ENCODE measurements at regions of chr12 and their contacts with region 1.

Region 1: DNA sequence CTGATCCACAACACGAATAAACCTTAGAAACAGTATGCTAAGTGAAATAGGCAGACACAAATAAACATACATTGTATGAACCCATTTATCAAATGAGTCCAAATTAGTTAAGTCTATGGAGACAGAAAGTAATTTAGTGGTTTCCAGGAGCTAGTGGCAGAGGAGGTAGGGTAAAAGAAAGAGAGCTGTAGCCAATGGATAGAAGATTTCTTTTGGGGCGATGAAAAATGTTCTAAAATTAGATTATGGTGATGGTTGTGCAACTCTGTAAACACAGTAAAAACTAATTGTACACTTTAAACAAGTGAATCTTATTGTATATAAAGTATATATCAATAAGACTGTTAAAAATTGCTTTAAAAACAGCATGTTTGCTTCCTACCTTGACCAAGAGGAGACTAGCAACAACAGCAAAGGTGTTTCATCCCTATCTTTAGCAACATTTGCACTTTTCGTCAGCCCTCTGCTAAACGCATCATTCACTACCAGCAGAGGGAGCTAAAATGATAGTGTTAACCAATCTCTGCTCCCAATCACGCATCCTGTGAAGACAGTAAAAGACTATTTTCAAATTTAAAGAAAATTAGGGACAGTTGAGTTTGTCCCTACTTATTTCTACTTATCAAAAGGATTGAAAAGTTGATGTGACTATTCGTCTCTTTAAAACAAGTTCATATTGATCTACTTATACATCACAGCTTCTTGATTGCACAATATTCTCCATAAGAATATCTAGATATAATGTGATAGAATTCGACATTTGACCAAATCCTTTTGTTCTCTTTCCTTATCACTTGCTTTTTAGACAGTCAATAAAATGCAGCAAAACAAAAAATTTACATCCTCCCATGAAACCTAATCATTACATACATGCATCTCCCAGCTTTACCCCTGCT is 24.0 kb upstream of the LGR5 start:
- DNase-seq: peak; percentile 81
- ATAC-seq: peak; percentile 86
- H3K4me3 ChIP-seq: no peak overlapping the region
- H3K27ac ChIP-seq: no peak overlapping the region
- H3K4me1 ChIP-seq: no peaks in the 10 kb centered on the region
- H3K27me3 ChIP-seq: no peaks in the 10 kb centered on the region
- CTCF ChIP-seq: peak; percentile 91

Region 2: GRCh38 chr12:71312768-71313403 is 102.7 kb before region 1 on chr12:
- CTCF ChIA-PET with region 1: no interaction called
- POLR2A ChIA-PET with region 1: no interaction called
- intact Hi-C with region 1: no loop called
- DNase-seq: peak; percentile 56
- ATAC-seq: no peak; the same call in 1 of the 2 replicates
- H3K4me3 ChIP-seq: no peak overlapping the region
- H3K27ac ChIP-seq: no peak overlapping the region
- H3K4me1 ChIP-seq: peaks cover 10% of the 10 kb centered on the region; the same call in 1 of the 2 replicates
- H3K27me3 ChIP-seq: no peaks in the 10 kb centered on the region
- CTCF ChIP-seq: no peak

Region 3: DNA sequence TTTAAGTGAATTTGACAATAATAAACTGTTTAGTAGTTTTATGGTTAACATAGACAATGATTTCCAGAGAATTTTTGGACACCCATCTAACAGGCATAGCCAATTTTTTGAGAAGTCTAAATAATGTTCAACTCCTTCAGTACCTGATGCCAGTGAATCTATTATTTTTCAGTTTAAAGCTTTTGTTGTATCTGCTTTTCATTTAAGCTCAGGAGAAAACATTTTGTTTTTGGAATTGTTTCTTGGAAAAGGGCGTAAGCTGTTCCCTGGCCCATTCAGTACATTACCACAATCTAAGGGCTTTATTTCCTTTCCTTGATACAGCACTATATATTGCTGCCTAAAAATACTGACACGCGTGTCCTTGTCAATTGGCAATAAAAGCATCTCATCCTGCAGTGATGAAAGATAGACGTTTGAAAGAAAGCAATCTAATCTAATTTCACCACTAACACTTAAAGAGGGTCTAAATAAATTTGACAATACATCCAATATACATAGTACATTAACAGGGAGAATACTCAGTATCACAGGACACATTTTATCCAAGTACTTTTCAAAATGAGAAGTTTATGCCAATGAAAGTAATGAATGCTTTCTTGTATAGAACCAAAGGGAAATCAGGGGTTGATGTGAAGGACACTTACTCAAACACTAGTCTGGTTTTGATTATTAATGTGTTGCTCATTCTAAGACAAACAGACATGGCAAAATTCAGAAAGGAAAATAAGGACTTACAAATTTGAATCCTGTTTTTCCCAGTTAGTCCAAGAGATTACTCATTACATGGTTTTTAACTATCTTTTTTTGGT is 80.2 kb before region 1 on chr12:
- CTCF ChIA-PET with region 1: no interaction called
- POLR2A ChIA-PET with region 1: no interaction called
- intact Hi-C with region 1: no loop called
- DNase-seq: peak; percentile 63
- ATAC-seq: peak; percentile 82
- H3K4me3 ChIP-seq: no peak overlapping the region
- H3K27ac ChIP-seq: peak overlapping the region; percentile 49
- H3K4me1 ChIP-seq: peaks cover 23% of the 10 kb centered on the region
- H3K27me3 ChIP-seq: no peaks in the 10 kb centered on the region
- CTCF ChIP-seq: no peak

Region 4: GRCh38 chr12:71385155-71385554 is 30.4 kb before region 1 on chr12:
- CTCF ChIA-PET with region 1: no interaction called
- POLR2A ChIA-PET with region 1: no interaction called
- intact Hi-C with region 1: no loop called
- DNase-seq: no peak
- ATAC-seq: no peak
- H3K4me3 ChIP-seq: no peak overlapping the region
- H3K27ac ChIP-seq: no peak overlapping the region
- H3K4me1 ChIP-seq: no peaks in the 10 kb centered on the region
- H3K27me3 ChIP-seq: no peaks in the 10 kb centered on the region
- CTCF ChIP-seq: no peak

Region 5: DNA sequence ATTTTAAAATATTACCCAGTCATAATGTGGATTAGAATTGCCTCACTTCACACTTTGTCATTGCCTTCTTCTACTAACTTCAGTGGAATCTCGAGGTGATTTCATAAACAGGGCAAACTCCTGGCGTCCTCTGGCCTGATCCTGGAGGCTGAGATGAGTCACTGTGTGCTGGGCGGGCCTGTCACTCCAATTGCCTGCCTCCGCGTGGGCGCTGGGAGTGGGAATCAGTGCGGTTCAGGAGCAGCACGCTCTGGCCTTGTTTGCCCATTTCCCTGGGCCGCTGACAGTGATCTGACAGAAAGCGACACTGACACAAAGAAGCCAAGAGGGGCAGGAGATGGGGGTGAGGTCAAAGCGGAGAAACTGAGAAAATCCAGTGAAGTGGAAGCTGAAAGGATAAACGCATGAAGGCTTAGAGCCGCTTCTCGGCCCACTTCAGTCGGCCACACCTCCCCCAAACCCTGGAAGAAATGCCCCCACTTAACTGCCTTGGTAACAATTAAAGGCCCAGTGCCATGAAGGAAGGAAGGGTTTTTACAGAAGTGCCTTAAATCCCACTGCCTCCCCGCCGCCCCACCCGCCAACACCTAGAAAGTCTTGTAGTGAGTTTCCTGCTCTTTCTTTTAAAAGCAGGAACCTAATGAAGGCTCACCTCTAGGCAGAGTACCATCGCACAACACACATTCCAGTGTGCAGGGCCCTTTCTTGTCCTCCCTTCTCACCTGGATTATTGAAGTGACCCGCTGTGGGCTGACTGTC is 53.9 kb after region 1 on chr12:
- CTCF ChIA-PET with region 1: no interaction called
- POLR2A ChIA-PET with region 1: no interaction called
- intact Hi-C with region 1: loop called (anchors 10 kb)
- DNase-seq: peak; percentile 31
- ATAC-seq: no peak
- H3K4me3 ChIP-seq: no peak overlapping the region
- H3K27ac ChIP-seq: no peak overlapping the region
- H3K4me1 ChIP-seq: no peaks in the 10 kb centered on the region
- H3K27me3 ChIP-seq: peaks cover 35% of the 10 kb centered on the region
- CTCF ChIP-seq: no peak

Region 6: GRCh38 chr12:71551529-71551928 is 135.9 kb after region 1 on chr12:
- CTCF ChIA-PET with region 1: no interaction called
- POLR2A ChIA-PET with region 1: no interaction called
- intact Hi-C with region 1: loop called (anchors 1 kb)
- DNase-seq: peak; percentile 44
- ATAC-seq: peak; percentile 45
- H3K4me3 ChIP-seq: no peak overlapping the region
- H3K27ac ChIP-seq: no peak overlapping the region
- H3K4me1 ChIP-seq: no peaks in the 10 kb centered on the region
- H3K27me3 ChIP-seq: no peaks in the 10 kb centered on the region
- CTCF ChIP-seq: peak; percentile 74

Region 7: DNA sequence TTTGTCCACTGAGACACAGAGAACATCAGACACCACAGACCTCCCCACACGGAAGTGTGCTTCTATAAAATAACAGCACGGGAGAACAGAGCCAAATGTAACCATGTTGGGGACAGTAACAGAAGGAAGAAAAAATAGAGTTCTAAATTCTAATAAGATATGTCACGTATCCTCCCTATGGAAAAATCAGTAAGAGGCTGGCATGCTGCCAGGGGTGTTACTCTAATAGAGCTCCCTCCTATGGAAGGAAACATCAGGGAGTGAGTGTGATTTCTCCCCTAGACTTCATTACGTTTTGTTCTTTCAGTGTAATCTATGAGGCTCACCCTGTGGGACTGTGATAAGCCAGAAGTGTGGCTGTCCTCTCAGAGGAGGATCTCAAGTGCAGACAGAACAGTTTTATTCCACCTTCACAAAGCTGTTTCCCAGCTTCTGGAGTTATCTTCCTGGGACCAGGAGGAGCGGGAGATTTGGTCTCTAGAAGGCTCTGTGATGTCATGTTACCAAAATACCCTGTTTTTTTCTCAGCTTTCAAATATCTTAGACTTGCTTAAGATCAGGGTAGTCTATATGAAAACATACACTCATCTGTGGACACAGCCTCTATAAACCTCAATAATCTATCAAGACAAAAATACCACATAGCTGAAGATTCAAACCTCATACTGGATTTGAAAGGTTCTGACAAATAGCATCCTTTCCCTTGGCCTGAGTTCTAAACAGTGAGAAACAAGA is 178.8 kb after region 1 on chr12:
- CTCF ChIA-PET with region 1: no interaction called
- POLR2A ChIA-PET with region 1: no interaction called
- intact Hi-C with region 1: no loop called
- DNase-seq: peak; percentile 72
- ATAC-seq: peak; percentile 53
- H3K4me3 ChIP-seq: peak overlapping the region; percentile 62
- H3K27ac ChIP-seq: no peak overlapping the region
- H3K4me1 ChIP-seq: no peaks in the 10 kb centered on the region
- H3K27me3 ChIP-seq: no peaks in the 10 kb centered on the region
- CTCF ChIP-seq: no peak

Region 8: DNA sequence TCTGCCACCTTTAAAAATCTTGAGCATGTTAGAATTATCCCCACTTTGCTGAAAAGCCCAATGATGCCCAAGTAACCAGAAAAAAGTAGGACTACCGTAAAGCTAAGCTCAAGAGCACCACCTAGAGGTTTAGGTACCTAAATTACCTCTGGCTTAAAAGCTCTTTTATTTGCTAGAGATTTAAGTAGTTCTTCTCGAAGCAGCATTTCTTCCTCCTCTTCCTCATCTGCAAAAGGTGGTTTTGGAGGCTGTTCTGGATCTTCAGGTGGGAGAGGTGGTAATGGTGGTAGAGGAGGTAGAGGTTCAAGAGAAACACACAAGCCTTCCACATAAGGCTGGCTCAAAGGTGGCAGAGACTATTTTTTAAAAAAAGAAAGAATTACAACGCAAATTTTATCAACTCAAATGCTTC is 221.1 kb after region 1 on chr12:
- CTCF ChIA-PET with region 1: no interaction called
- POLR2A ChIA-PET with region 1: no interaction called
- intact Hi-C with region 1: loop called (anchors 1 kb)
- DNase-seq: peak; percentile 84
- ATAC-seq: peak; percentile 48; the same call in 1 of the 2 replicates
- H3K4me3 ChIP-seq: no peak overlapping the region
- H3K27ac ChIP-seq: no peak overlapping the region
- H3K4me1 ChIP-seq: no peaks in the 10 kb centered on the region
- H3K27me3 ChIP-seq: no peaks in the 10 kb centered on the region
- CTCF ChIP-seq: peak; percentile 87